ENCODE measurements at regions of chr3 and their contacts with region 1.

Region 1: GRCh38 chr3:7913283-7913682 is 588.3 kb upstream of the LMCD1 start:
- DNase-seq: no peak
- ATAC-seq: no peak
- H3K4me3 ChIP-seq: no peak overlapping the region
- H3K27ac ChIP-seq: no peak overlapping the region
- H3K4me1 ChIP-seq: no peaks in the 10 kb centered on the region
- H3K27me3 ChIP-seq: no peaks in the 10 kb centered on the region
- CTCF ChIP-seq: no peak

Region 2: GRCh38 chr3:7518456-7518855 is 394.8 kb before region 1 on chr3:
- CTCF ChIA-PET with region 1: no interaction called
- POLR2A ChIA-PET with region 1: no interaction called
- in situ Hi-C with region 1: no loop called
- intact Hi-C with region 1: no loop called
- DNase-seq: no peak
- ATAC-seq: no peak
- H3K4me3 ChIP-seq: no peak overlapping the region
- H3K27ac ChIP-seq: no peak overlapping the region
- H3K4me1 ChIP-seq: no peaks in the 10 kb centered on the region
- H3K27me3 ChIP-seq: no peaks in the 10 kb centered on the region
- CTCF ChIP-seq: no peak

Region 3: DNA sequence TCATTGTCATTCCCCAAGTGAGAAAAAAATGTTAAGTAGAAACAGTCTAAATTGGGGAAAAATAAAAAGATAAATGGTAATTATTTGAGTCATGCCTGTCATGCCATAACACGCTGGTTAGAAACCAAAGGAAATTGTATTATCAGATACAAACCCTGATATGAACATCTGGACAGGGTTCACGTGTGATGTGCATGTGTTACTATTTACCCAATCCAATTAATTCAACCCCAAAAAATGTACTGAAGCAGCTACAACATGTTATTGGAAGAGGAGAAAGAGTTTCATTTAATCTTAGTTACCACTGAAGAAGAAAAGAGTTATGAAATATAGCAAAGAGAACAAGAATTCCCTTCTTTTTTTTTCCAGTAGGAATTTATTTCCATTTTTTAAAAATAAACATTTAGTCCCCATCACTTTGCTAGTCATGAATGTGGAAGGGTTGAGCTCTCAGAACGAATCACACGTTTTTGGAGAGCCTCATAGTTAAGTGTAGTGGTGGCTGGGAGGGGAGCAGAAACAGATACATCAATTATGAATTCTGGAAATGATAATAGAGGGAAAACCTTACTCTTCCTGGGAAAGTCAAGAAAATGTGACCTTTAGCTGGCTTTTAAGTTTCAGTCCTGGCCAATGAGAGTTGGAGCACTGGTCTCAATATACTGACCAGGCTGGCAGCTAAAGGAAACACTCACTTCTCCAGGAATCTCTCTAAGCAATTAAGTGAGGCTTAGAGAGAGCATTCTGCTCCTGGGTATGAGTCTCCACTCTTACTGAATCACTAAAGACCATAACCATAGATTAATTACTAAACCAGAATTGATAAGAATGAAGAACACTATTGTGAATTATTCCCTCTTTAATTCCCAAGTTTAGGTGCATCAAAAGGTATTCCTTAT is 255.8 kb before region 1 on chr3:
- CTCF ChIA-PET with region 1: no interaction called
- POLR2A ChIA-PET with region 1: interaction called, 17 read pairs
- in situ Hi-C with region 1: no loop called
- intact Hi-C with region 1: no loop called
- DNase-seq: no peak
- ATAC-seq: no peak
- H3K4me3 ChIP-seq: no peak overlapping the region
- H3K27ac ChIP-seq: no peak overlapping the region
- H3K4me1 ChIP-seq: no peaks in the 10 kb centered on the region
- H3K27me3 ChIP-seq: no peaks in the 10 kb centered on the region
- CTCF ChIP-seq: no peak

Region 4: DNA sequence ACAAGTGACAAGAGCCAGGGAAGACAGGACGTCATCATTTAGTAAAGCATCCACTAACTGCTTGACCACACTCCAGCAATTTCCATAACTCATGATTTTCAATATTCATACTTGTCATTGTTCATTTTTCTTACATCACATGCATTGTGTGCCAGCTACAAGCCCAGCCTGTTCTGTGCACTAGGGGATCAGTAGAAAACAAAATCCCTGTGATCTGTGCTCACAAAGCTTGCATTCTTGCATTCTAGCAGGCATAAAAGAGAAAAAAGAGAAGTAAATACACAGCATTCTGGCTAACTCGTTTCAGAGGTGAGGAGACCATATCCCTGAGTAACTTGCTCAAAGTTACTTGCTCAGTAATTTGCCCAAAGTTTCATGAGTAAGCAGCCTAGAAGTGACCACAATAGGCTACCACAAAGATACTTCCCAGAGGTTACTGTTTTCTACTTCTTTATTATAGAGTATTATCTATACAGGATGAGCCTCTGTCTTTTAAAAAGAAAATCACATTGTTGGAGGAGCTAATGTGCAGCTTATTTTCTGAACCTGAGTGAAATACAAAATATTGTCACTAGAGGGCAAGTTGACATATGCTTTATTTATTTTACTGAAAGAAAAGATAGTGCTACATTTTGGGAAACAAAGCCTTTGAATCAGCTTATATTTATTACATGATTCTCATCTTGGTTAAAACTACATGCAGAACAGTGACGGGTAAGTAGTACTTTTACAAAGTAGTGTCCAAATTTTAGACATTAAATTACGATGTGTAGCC is 113.1 kb before region 1 on chr3:
- CTCF ChIA-PET with region 1: no interaction called
- POLR2A ChIA-PET with region 1: no interaction called
- in situ Hi-C with region 1: no loop called
- intact Hi-C with region 1: no loop called
- DNase-seq: no peak
- ATAC-seq: no peak
- H3K4me3 ChIP-seq: no peak overlapping the region
- H3K27ac ChIP-seq: no peak overlapping the region
- H3K4me1 ChIP-seq: no peaks in the 10 kb centered on the region
- H3K27me3 ChIP-seq: no peaks in the 10 kb centered on the region
- CTCF ChIP-seq: peak; percentile 8; the same call in 1 of the 2 replicates

Measured in Panc1 (cell line).